Activated naive CD4-positive, alpha-beta T cell treated with anti-CD3 and anti-CD28 coated beads, Interleukin-2, amount 10 ng/mL, durations not matched to agents 7 days and 5 days (primary cell): ENCODE measurements at regions of chr9 and their contacts with region 1.

Region 1: DNA sequence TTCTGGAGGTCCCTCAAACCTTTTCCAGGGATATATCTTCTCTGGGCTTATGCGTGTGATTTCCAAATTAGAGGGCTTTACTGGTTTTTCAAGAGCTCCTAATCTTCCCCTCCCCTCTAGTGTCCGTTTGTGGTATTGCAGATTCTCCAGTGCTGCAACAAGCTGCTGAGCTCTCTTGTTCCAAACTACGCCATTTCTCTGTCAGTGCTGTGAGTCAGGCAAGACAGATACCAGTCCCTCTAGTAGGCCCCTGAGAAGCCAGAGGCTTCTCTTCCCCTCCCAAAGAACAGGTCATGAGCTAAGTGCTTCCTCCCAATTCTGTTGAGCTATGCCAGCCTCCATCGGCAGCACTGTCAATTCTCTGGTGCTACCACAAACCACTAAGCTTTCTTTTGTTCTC is 149.5 kb downstream of the FANCC start:
- DNase-seq: peak; percentile 73
- H3K4me3 Mint-ChIP-seq: no peak overlapping the region
- H3K27ac Mint-ChIP-seq: no peak overlapping the region
- H3K4me1 Mint-ChIP-seq: peaks cover 14% of the 10 kb centered on the region
- H3K27me3 Mint-ChIP-seq: no peaks in the 10 kb centered on the region

Region 2: GRCh38 chr9:95116003-95116807 is 51.8 kb before region 1 on chr9:
- CTCF ChIA-PET with region 1: no interaction called
- DNase-seq: no peak
- H3K4me3 Mint-ChIP-seq: no peak overlapping the region
- H3K27ac Mint-ChIP-seq: no peak overlapping the region
- H3K4me1 Mint-ChIP-seq: no peaks in the 10 kb centered on the region
- H3K27me3 Mint-ChIP-seq: no peaks in the 10 kb centered on the region

Region 3: GRCh38 chr9:95157481-95158151 is 10.4 kb before region 1 on chr9:
- CTCF ChIA-PET with region 1: interaction called, 25 read pairs
- DNase-seq: no peak
- H3K4me3 Mint-ChIP-seq: no peak overlapping the region
- H3K27ac Mint-ChIP-seq: no peak overlapping the region
- H3K4me1 Mint-ChIP-seq: peaks cover 11% of the 10 kb centered on the region
- H3K27me3 Mint-ChIP-seq: no peaks in the 10 kb centered on the region

Region 4: GRCh38 chr9:95336281-95336680 is 168.3 kb after region 1 on chr9:
- CTCF ChIA-PET with region 1: no interaction called
- DNase-seq: no peak
- H3K4me3 Mint-ChIP-seq: no peak overlapping the region
- H3K27ac Mint-ChIP-seq: no peak overlapping the region
- H3K4me1 Mint-ChIP-seq: no peaks in the 10 kb centered on the region
- H3K27me3 Mint-ChIP-seq: peaks cover 18% of the 10 kb centered on the region

Region 5: DNA sequence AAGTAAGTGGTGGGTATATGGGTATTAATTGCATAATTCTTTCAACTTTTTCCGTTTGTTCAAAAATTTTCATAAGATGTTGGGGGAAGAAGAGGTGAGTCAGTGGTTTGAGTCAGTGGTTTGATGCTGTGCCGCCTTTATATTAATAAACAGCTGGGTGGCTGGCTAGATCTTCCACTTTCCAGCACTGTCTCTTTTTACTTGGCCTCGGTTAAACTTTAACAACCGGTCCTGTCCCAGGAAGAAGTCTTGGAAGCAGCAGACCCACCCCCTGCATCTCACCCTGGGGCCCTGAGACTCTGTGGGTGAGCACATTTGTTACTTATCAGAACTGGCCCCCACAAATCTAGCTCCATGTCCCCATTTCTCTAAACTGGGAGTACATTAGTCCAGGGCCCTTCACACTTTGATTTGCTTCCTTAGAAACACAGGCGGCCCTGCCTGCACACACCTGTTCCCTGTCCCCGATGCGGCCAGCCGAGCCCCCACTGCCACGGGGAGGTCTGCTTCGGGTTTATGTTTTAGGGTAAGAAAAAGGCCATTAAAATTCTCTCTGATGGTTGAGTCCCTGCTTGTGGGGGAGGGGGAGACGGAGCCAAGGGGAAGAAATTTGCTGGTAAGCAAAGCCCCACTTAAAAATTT is 258.0 kb after region 1 on chr9:
- CTCF ChIA-PET with region 1: no interaction called
- DNase-seq: no peak
- H3K4me3 Mint-ChIP-seq: peak overlapping the region; percentile 61
- H3K27ac Mint-ChIP-seq: no peak overlapping the region
- H3K4me1 Mint-ChIP-seq: peaks cover 10% of the 10 kb centered on the region
- H3K27me3 Mint-ChIP-seq: peaks cover 27% of the 10 kb centered on the region

Region 6: DNA sequence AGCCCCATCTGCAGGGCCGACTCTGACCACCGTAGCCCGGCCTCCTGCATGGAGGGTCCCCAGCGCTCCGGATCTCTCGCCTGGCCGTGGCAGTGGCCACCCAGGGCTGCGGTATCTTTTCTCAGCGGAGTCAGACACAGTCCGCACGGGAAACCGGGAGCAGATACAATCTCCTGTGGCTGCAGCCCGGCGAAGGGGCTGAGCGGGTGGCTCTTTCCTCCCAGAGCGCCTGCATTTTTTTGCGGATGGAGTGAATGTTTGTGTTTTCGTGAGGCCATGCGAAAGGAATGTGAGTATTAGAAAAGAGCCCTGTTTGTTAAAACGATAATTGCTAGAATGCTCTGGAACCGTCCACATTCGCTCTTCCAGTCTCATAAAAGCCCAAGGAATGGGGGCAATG is 402.2 kb after region 1 on chr9:
- CTCF ChIA-PET with region 1: no interaction called
- DNase-seq: no peak
- H3K4me3 Mint-ChIP-seq: no peak overlapping the region
- H3K27ac Mint-ChIP-seq: no peak overlapping the region
- H3K4me1 Mint-ChIP-seq: peaks cover 12% of the 10 kb centered on the region
- H3K27me3 Mint-ChIP-seq: peaks cover 34% of the 10 kb centered on the region